ENCODE measurements at regions of chr7 and their contacts with region 1.

Region 1: DNA sequence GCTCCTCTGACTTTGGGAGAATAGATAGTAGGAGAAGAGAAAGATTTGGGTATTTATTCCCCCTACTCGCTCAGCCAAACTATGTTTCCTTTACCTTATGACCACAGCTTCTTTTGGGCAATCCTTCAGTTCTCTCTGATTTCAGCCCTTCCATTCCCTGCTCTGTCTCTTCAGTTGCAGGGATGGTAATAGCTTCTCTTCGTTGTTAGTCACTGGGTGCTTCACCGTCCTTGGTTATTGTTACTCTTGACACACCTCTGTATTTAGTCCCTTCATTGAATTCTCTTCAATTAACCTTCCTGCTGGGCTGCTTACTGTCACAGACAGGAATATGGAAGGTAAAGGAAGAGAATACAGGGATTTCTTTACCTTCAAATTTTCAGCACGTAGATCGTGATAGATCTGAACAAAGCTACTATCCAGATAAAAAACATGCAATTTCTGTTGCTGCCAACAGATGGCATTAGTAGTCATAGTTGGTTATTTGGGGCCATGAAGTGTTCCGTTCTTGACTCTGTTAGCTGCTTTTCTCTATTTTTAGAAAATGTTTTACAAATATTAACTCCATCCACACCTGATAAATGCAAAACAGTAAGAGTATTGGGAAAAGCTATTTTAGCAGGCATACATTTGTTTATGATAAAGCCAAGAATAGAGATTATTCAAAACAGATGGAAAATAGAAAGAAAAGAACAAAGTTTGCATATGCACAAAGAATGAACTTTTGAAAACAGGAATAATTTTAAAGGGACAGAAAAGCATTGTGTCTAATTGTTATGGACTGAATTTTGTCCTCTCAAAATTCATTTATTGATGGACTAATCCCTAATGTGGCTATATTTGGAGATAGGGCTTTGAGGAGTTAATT is 14.0 kb upstream of the PTTG1IP2 start:
- DNase-seq: no peak
- H3K4me3 Mint-ChIP-seq: no peak overlapping the region
- H3K27ac Mint-ChIP-seq: no peak overlapping the region
- H3K4me1 Mint-ChIP-seq: peaks cover 7% of the 10 kb centered on the region
- H3K27me3 Mint-ChIP-seq: peaks cover 13% of the 10 kb centered on the region

Region 2: GRCh38 chr7:90629297-90629918 is 174.0 kb after region 1 on chr7:
- intact Hi-C with region 1: loop called (anchors 1 kb)
- DNase-seq: no peak
- H3K4me3 Mint-ChIP-seq: no peak overlapping the region
- H3K27ac Mint-ChIP-seq: no peak overlapping the region
- H3K4me1 Mint-ChIP-seq: no peaks in the 10 kb centered on the region
- H3K27me3 Mint-ChIP-seq: no peaks in the 10 kb centered on the region

Region 3: GRCh38 chr7:90708841-90709317 is 253.5 kb after region 1 on chr7:
- intact Hi-C with region 1: loop called (anchors 5 kb)
- DNase-seq: no peak
- H3K4me3 Mint-ChIP-seq: no peak overlapping the region
- H3K27ac Mint-ChIP-seq: no peak overlapping the region
- H3K4me1 Mint-ChIP-seq: no peaks in the 10 kb centered on the region
- H3K27me3 Mint-ChIP-seq: peaks cover 2% of the 10 kb centered on the region

Region 4: GRCh38 chr7:91636129-91636724 is 1180.8 kb after region 1 on chr7:
- intact Hi-C with region 1: loop called (anchors 5 kb)
- DNase-seq: no peak
- H3K4me3 Mint-ChIP-seq: no peak overlapping the region
- H3K27ac Mint-ChIP-seq: no peak overlapping the region
- H3K4me1 Mint-ChIP-seq: no peaks in the 10 kb centered on the region
- H3K27me3 Mint-ChIP-seq: no peaks in the 10 kb centered on the region